ENCODE measurements at regions of chr2 and their contacts with region 1.

Region 1: DNA sequence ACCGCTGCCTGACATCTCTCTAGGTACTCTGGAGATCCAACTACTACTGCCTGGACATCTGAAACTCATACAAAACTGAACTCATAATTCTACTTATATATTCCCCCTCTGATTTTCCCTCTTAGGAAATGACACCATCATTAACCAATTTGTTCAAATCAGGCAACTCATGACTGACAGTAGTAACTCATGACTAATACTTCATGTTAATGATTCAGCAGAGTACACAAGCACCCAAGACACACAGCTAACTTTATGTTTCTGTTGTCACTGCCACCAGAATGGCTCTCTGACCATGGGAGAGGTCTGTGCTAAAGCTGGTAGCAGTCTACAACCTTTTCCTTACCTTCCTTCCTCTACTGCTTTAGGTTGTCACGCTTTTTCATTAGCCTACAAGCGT is 91.1 kb downstream of the ITSN2 start:
- DNase-seq: peak; percentile 17
- H3K4me3 Mint-ChIP-seq: no peak overlapping the region
- H3K27ac Mint-ChIP-seq: peak overlapping the region; percentile 71
- H3K4me1 Mint-ChIP-seq: peaks cover 16% of the 10 kb centered on the region
- H3K27me3 Mint-ChIP-seq: no peaks in the 10 kb centered on the region
- CTCF ChIP-seq: no peak

Region 2: GRCh38 chr2:23939987-23940717 is 329.1 kb before region 1 on chr2 and contains the start of gene UBXN2A:
- CTCF ChIA-PET with region 1: interaction called, 13 read pairs
- intact Hi-C with region 1: no loop called
- DNase-seq: peak; percentile 82
- H3K4me3 Mint-ChIP-seq: peak within 1 kb of the TSS; percentile 75
- H3K27ac Mint-ChIP-seq: peak within 1 kb of the TSS; percentile 51
- H3K4me1 Mint-ChIP-seq: peaks cover 40% of the 10 kb centered on the region
- H3K27me3 Mint-ChIP-seq: peaks cover 8% of the 10 kb centered on the region
- CTCF ChIP-seq: no peak
- total RNA-seq, gene UBXN2A: 12.8 and 15.1 TPM in 2 replicates

Region 3: GRCh38 chr2:24351981-24352380 is 82.7 kb after region 1 on chr2:
- CTCF ChIA-PET with region 1: no interaction called
- intact Hi-C with region 1: no loop called
- DNase-seq: no peak
- H3K4me3 Mint-ChIP-seq: no peak overlapping the region
- H3K27ac Mint-ChIP-seq: no peak overlapping the region
- H3K4me1 Mint-ChIP-seq: peaks cover 18% of the 10 kb centered on the region
- H3K27me3 Mint-ChIP-seq: no peaks in the 10 kb centered on the region
- CTCF ChIP-seq: no peak

Region 4: GRCh38 chr2:24365051-24365450 is 95.8 kb after region 1 on chr2:
- CTCF ChIA-PET with region 1: no interaction called
- intact Hi-C with region 1: no loop called
- DNase-seq: peak; percentile 83
- H3K4me3 Mint-ChIP-seq: peak overlapping the region; percentile 2
- H3K27ac Mint-ChIP-seq: peak overlapping the region; percentile 63
- H3K4me1 Mint-ChIP-seq: peaks cover 32% of the 10 kb centered on the region
- H3K27me3 Mint-ChIP-seq: no peaks in the 10 kb centered on the region
- CTCF ChIP-seq: no peak